HEK293 (cell line): ENCODE measurements at regions of chr1 and their contacts with region 1.

Region 1: GRCh38 chr1:225772323-225772768 is 5.3 kb upstream of the SRP9 start:
- H3K4me3 ChIP-seq: no peak overlapping the region
- H3K27ac ChIP-seq: no peak overlapping the region
- H3K4me1 ChIP-seq: peaks cover 11% of the 10 kb centered on the region
- CTCF ChIP-seq: peak; percentile 97

Region 2: GRCh38 chr1:225544263-225544662 is 228.1 kb before region 1 on chr1:
- CTCF ChIA-PET with region 1: interaction called, 10 read pairs
- POLR2A ChIA-PET with region 1: interaction called, 4 read pairs
- H3K4me3 ChIP-seq: no peak overlapping the region
- H3K27ac ChIP-seq: no peak overlapping the region
- H3K4me1 ChIP-seq: peaks cover 15% of the 10 kb centered on the region
- CTCF ChIP-seq: no peak

Region 3: DNA sequence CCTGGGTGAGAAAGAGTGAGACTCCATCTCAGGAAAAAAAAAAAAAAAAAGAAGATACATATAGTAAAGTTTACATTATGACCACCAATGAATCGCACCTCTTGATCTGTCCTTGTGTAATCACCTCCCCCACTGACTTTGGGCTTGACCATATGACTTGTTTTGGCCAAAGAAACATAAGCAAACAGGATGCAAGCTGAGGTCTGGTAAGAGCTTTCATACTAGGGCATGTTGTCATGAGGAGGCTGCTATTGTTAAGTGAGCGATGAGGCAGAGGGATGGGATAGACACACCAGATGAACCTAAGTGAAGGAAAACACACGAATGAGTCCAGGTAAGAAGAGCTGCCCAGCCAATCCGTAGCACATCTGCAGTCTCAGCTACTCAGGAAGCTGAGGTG is 130.2 kb before region 1 on chr1:
- CTCF ChIA-PET with region 1: interaction called, 14 read pairs
- POLR2A ChIA-PET with region 1: interaction called, 3 read pairs
- H3K4me3 ChIP-seq: no peak overlapping the region
- H3K27ac ChIP-seq: no peak overlapping the region
- H3K4me1 ChIP-seq: no peaks in the 10 kb centered on the region
- CTCF ChIP-seq: no peak

Region 4: GRCh38 chr1:225700164-225700740 is 72.1 kb before region 1 on chr1:
- CTCF ChIA-PET with region 1: interaction called, 17 read pairs
- POLR2A ChIA-PET with region 1: interaction called, 9 read pairs
- H3K4me3 ChIP-seq: no peak overlapping the region; the same call in 1 of the 2 replicates
- H3K27ac ChIP-seq: no peak overlapping the region; the same call in 1 of the 2 replicates
- H3K4me1 ChIP-seq: peaks cover 25% of the 10 kb centered on the region
- CTCF ChIP-seq: no peak

Region 5: DNA sequence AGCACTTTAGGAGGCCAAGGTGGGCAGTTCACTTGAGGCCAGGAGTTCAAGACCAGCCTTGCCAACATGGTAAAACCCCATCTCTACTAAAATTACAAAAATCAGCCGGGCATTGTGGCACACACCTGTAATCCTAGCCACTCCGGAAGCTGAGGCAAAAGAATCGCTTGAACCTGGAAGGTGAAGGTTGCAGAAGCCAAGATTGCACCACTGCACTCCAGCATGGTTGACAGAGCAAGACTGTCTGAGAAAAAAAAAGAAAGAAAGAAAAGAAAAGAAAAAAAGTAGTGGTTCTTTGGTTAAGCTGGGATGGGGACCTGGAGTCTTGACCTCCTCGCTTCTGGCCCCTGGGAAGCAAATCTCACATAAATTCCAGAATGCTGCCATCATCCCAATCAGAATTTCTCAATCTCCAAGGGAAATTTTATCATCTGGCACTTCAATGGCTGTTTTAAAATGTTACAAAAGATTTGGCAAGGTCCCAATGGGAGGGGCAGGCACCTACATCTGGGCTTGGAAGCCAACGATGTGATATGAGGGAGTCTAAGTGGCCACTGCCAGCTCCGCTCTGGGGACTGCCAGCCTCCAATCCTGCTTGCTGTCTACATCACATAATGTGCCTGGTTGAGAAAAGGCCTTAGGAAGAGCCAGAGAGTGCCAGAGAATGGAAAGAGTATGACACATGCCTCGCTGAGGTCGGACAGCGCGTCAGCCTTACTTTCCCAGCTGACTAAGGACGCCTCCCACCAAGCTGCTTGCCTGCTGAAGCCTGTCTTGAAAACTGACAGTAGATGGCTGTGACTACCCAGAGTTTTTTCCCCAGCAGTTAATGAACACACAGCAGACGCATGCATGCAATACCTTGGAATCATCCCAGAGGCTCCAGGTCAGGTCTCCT is 36.8 kb before region 1 on chr1:
- CTCF ChIA-PET with region 1: interaction called, 54 read pairs
- POLR2A ChIA-PET with region 1: interaction called, 17 read pairs
- H3K4me3 ChIP-seq: no peak overlapping the region
- H3K27ac ChIP-seq: no peak overlapping the region
- H3K4me1 ChIP-seq: peaks cover 17% of the 10 kb centered on the region
- CTCF ChIP-seq: 0 out of 2 replicates have a peak, but pooled peaks have one; percentile 16

Region 6: GRCh38 chr1:225888898-225889601 is 116.7 kb after region 1 on chr1 and contains the start of gene LEFTY1:
- CTCF ChIA-PET with region 1: no interaction called
- POLR2A ChIA-PET with region 1: no interaction called
- H3K4me3 ChIP-seq: no peak within 1 kb of the TSS
- H3K27ac ChIP-seq: no peak within 1 kb of the TSS
- H3K4me1 ChIP-seq: no peaks in the 10 kb centered on the region
- CTCF ChIP-seq: no peak

Region 7: DNA sequence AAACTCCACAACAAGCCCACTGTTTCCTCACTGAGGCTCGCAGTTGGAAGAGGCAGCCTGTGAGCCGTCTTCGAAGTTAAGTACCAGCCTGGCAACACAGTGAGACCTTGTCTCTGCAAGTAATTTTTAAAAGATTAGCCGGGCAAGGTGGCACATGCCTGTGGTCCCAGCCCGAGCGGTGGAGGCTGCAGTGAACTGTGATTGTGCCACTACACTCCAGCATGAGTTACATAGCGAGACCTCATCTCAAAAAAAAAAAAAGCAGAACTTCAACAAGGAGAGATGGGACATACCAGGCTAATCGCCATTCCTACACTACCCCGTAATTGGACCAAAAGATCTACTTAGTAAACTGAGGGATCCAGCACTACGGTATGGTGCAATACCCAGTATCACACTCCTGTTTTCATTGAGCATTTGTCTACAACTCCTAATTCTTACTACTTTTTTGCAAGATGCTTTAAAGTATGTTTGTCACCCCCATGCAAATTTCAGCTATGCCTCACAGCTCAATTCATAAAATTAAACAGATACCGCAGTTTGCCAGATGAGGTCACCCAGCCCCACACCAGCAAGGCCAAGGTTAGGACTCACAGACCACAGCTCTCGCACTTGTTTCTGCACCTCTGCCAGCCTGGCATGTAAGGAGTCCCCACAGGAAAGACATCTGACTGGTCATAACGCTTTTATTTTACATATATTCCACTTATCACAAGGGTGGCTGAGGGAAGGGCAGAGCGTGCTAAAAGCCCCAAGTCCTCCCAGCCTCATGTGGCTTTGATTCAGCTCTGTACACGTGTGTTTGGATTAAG is 205.8 kb after region 1 on chr1:
- CTCF ChIA-PET with region 1: interaction called, 10 read pairs
- POLR2A ChIA-PET with region 1: interaction called, 3 read pairs
- H3K4me3 ChIP-seq: no peak overlapping the region
- H3K27ac ChIP-seq: no peak overlapping the region
- H3K4me1 ChIP-seq: no peaks in the 10 kb centered on the region
- CTCF ChIP-seq: no peak